ENCODE measurements at regions of chr4 and their contacts with region 1.

Region 1: DNA sequence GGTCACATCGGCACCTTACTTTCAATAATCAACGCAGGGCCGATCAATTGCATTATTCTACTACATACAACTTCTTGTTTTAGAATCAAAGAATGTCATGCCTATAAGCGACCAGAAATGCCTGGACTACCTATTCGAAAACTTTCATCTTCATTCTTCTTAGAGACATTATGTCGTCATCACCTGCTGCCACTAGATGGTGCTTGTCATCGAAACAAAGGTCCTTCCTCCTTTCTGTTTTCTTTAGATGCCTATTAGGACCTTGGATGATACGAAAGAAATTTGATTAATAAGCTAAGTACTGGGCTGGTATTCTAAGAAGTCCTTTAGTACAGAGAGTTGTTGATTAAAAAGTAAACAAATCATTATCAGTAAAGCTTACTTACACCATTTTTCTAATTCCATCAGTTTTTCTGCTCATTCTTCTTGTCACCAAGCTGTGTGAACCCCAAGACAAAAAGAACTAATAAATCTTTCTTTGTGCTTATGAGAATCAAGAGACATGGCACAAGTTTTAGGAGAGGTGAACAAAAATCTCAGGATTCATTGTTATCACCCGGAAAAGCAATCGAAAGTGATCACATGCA is 154.5 kb upstream of the SLC4A4 start:
- DNase-seq: peak in 8 of 9 experiments; percentile 3 to 80 (median 40)
- ATAC-seq: peak; percentile 28
- H3K4me3 ChIP-seq: no peak overlapping the region
- H3K4me3 Mint-ChIP-seq: no peak overlapping the region
- H3K27ac ChIP-seq: no peak overlapping the region
- H3K27ac Mint-ChIP-seq: no peak overlapping the region
- H3K4me1 ChIP-seq: peaks cover 15% of the 10 kb centered on the region
- H3K4me1 Mint-ChIP-seq: peaks cover 32% of the 10 kb centered on the region
- H3K27me3 ChIP-seq: no peaks in the 10 kb centered on the region
- H3K27me3 Mint-ChIP-seq: peaks cover 21% of the 10 kb centered on the region
- CTCF ChIP-seq: peak; percentile 76

Region 2: DNA sequence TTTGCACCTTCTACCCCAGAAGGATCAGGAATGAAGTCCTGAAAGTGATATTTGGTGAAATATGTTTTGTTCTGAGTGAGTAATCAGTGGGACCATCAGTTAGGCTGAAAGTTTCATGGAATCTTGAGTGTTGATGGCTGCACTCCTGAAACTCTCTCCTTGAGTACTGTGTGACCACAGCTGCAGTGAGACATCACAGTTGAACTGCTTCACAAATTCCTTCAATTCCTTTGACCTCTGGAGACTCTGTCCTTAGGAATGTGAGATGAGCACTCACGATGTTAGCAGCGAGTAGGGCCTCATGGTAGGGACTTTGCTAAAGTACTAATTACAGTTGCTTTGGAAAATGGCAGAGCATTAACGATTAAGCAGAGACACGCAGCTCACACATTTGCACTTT is 11.6 kb after region 1 on chr4:
- CTCF ChIA-PET with region 1: interaction called, 12 read pairs
- POLR2A ChIA-PET with region 1: interaction called, 3 read pairs
- intact Hi-C with region 1: loop called in 1 of 2 experiments (anchors 2 kb)
- DNase-seq: no peak
- ATAC-seq: no peak
- H3K4me3 ChIP-seq: no peak overlapping the region
- H3K4me3 Mint-ChIP-seq: no peak overlapping the region
- H3K27ac ChIP-seq: no peak overlapping the region
- H3K27ac Mint-ChIP-seq: no peak overlapping the region
- H3K4me1 ChIP-seq: peaks cover 8% of the 10 kb centered on the region
- H3K4me1 Mint-ChIP-seq: peaks cover 14% of the 10 kb centered on the region
- H3K27me3 ChIP-seq: no peaks in the 10 kb centered on the region
- H3K27me3 Mint-ChIP-seq: peaks cover 17% of the 10 kb centered on the region
- CTCF ChIP-seq: no peak

Region 3: DNA sequence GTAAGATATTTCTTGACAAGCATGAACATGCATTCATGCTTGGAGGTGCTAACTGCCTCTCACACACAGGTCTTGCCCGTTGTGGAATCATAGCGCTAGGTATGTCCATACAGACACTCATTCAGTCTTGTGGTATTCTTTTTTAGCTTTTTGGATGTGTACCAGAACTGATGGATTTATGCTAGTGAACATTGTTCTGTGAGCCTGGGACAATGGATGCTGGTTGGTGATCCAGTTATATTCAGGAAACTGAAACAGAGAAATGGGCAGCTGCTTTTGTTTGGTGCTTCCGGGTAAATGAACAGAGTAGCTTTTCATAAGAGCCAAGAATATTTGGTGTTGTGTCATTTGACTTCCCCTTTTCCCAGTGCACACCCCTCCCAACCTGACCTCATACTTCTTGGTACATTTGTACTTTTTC is 75.6 kb after region 1 on chr4:
- CTCF ChIA-PET with region 1: no interaction called
- POLR2A ChIA-PET with region 1: no interaction called
- intact Hi-C with region 1: loop called in 1 of 2 experiments (anchors 5 kb)
- DNase-seq: no peak
- ATAC-seq: no peak
- H3K4me3 ChIP-seq: no peak overlapping the region
- H3K4me3 Mint-ChIP-seq: no peak overlapping the region
- H3K27ac ChIP-seq: no peak overlapping the region
- H3K27ac Mint-ChIP-seq: no peak overlapping the region
- H3K4me1 ChIP-seq: peaks cover 9% of the 10 kb centered on the region
- H3K4me1 Mint-ChIP-seq: peaks cover 13% of the 10 kb centered on the region
- H3K27me3 ChIP-seq: no peaks in the 10 kb centered on the region
- H3K27me3 Mint-ChIP-seq: no peaks in the 10 kb centered on the region
- CTCF ChIP-seq: no peak

Region 4: DNA sequence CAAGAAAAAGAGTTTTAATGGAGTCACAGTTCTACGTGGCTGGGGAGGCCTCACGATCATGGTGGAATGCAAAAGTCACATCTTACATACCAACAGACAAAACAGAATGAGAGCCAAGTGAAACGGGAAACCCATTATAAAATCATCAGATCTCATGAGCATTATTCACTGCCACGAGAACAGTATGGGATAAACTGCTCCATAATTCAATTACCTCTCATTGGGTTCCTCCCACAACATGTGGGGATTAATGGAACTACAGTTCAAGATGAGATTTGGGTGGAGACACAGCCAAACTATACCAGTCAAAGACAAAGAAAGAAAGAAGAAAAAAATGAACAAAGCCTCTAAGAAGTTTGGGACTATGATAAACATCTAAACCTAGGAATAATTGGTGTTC is 440.7 kb after region 1 on chr4:
- CTCF ChIA-PET with region 1: no interaction called
- POLR2A ChIA-PET with region 1: no interaction called
- intact Hi-C with region 1: no loop called
- DNase-seq: no peak
- ATAC-seq: no peak
- H3K4me3 ChIP-seq: no peak overlapping the region
- H3K4me3 Mint-ChIP-seq: no peak overlapping the region
- H3K27ac ChIP-seq: no peak overlapping the region
- H3K27ac Mint-ChIP-seq: no peak overlapping the region
- H3K4me1 ChIP-seq: no peaks in the 10 kb centered on the region
- H3K4me1 Mint-ChIP-seq: no peaks in the 10 kb centered on the region
- H3K27me3 ChIP-seq: no peaks in the 10 kb centered on the region
- H3K27me3 Mint-ChIP-seq: peaks cover 4% of the 10 kb centered on the region
- CTCF ChIP-seq: no peak

Region 5: GRCh38 chr4:71713611-71714203 is 529.4 kb after region 1 on chr4:
- CTCF ChIA-PET with region 1: interaction called, 4 read pairs
- POLR2A ChIA-PET with region 1: no interaction called
- intact Hi-C with region 1: loop called (anchors 1 to 5 kb)
- DNase-seq: peak in 2 of 9 experiments; percentile 46 to 54
- ATAC-seq: no peak
- H3K4me3 ChIP-seq: no peak overlapping the region
- H3K4me3 Mint-ChIP-seq: no peak overlapping the region
- H3K27ac ChIP-seq: no peak overlapping the region
- H3K27ac Mint-ChIP-seq: no peak overlapping the region
- H3K4me1 ChIP-seq: no peaks in the 10 kb centered on the region
- H3K4me1 Mint-ChIP-seq: no peaks in the 10 kb centered on the region
- H3K27me3 ChIP-seq: no peaks in the 10 kb centered on the region
- H3K27me3 Mint-ChIP-seq: no peaks in the 10 kb centered on the region
- CTCF ChIP-seq: peak; percentile 52

Region 6: DNA sequence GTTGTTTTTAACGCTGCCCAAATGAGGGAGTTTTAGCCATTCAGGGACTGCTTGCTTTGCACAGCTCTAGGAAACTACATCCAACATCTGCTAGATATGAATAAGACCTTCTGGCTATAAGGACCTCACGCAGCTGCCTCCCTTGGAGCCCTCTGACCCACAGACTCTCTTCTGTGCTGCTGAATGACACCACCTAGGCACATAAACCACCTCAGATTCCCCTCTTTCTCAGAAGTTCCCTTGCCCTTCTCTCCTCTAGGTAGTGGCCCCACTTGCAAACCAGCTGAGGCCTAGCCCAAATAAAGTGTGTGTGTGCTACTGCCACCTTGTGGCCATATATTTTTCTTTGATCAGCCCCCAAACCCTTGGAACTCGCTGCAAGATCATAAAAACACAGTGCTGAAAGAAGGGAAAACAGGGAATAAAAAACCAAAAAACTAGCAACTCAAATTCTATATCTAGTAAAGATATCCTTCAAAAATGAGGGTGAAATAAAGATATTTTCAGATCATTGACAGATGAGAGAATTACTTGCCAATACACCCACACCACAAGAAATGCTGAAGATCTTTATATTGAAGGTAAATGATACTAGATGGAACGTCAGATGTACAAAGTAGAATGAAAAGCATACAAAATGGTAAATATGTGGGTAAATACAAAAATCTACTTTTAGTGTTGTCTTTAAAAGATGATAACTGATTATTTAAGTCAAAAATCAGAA is 1118.9 kb after region 1 on chr4:
- CTCF ChIA-PET with region 1: interaction called, 3 read pairs
- POLR2A ChIA-PET with region 1: no interaction called
- intact Hi-C with region 1: loop called in 1 of 2 experiments (anchors 5 kb)
- DNase-seq: peak in 7 of 9 experiments; percentile 7 to 57 (median 40)
- ATAC-seq: peak; percentile 66
- H3K4me3 ChIP-seq: no peak overlapping the region
- H3K4me3 Mint-ChIP-seq: no peak overlapping the region
- H3K27ac ChIP-seq: no peak overlapping the region
- H3K27ac Mint-ChIP-seq: no peak overlapping the region
- H3K4me1 ChIP-seq: no peaks in the 10 kb centered on the region
- H3K4me1 Mint-ChIP-seq: no peaks in the 10 kb centered on the region
- H3K27me3 ChIP-seq: no peaks in the 10 kb centered on the region
- H3K27me3 Mint-ChIP-seq: peaks cover 2% of the 10 kb centered on the region
- CTCF ChIP-seq: peak; percentile 77